Activated CD8-positive, alpha-beta T cell treated with anti-CD3 and anti-CD28 coated beads for 36 hours (primary cell): ENCODE measurements at regions of chr17 and their contacts with region 1.

Region 1: DNA sequence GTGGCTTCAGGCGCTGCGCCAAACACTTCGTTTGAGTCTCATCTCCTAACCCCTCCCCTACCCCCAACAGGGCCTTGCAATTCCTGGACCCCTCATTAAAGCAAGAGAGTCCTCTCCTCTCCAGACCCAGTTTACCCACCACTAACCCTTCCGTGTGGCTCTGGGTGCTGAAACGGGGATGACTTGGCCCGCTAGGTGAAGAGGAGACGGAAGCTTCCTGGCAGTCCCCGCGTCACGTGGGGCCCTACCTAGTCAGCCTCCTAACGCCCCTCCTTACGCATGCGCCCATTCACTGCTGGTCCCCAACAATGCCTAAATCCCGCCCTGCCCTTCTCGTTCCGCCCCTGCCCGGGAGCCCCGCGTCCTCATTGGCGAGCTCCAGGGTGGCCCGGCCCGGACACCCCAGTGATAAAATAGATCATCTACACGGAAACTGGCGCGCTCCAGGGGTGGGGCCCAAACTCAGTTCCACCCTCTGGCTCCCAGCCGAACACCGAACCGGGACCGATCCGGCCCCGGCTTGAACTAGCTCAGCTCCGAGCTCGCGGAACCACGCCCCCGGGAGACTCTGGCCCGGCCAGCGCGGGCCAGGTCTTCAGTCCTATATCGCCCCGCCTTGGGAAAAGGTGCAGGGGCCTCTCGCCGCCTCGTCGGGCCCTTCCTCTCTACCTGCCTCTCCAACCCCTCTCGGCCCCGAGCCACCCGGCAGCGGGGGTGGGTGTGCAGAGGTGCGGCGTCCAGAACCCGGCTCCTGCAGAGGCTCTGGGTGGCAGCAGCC is at the start of gene SLC16A13:
- DNase-seq: peak; percentile 99
- ATAC-seq: peak; percentile 95
- H3K4me3 Mint-ChIP-seq: peak within 1 kb of the TSS; percentile 93
- H3K27ac Mint-ChIP-seq: peak within 1 kb of the TSS; percentile 96
- H3K4me1 Mint-ChIP-seq: peaks cover 47% of the 10 kb centered on the region
- H3K27me3 Mint-ChIP-seq: no peaks in the 10 kb centered on the region
- CTCF ChIP-seq: no peak
- total RNA-seq, gene SLC16A13: 4.8 to 5.9 TPM

Region 2: DNA sequence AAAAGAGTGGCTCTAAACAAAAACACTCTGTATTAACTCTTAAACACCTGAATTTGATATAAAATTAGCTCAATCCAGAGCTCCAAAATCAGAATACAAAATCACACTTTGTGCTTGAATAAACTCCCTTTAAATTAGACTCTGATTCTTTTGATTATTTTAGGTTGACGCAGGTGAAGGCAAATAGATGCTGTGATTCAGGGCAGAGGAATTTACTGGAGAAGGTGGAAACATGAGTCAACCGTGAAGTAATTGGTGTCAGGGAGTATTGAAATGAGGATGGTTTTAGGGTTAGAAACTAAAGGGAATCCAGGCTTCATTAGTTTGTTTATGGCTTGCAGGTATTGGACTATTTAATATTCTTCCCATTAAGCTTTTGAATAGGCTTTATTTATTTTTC is 167.2 kb before region 1 on chr17:
- CTCF ChIA-PET with region 1: no interaction called
- POLR2A ChIA-PET with region 1: no interaction called
- intact Hi-C with region 1: no loop called
- DNase-seq: no peak
- ATAC-seq: no peak
- H3K4me3 Mint-ChIP-seq: no peak overlapping the region
- H3K27ac Mint-ChIP-seq: no peak overlapping the region
- H3K4me1 Mint-ChIP-seq: no peaks in the 10 kb centered on the region
- H3K27me3 Mint-ChIP-seq: peaks cover 13% of the 10 kb centered on the region
- CTCF ChIP-seq: no peak

Region 3: GRCh38 chr17:7014261-7014994 is 21.4 kb before region 1 on chr17:
- CTCF ChIA-PET with region 1: interaction called, 6 read pairs
- POLR2A ChIA-PET with region 1: interaction called, 11 read pairs
- intact Hi-C with region 1: no loop called
- DNase-seq: peak; percentile 98
- ATAC-seq: peak; percentile 86
- H3K4me3 Mint-ChIP-seq: peak overlapping the region; percentile 83
- H3K27ac Mint-ChIP-seq: peak overlapping the region; percentile 98
- H3K4me1 Mint-ChIP-seq: peaks cover 52% of the 10 kb centered on the region
- H3K27me3 Mint-ChIP-seq: no peaks in the 10 kb centered on the region
- CTCF ChIP-seq: peak; percentile 77

Region 4: DNA sequence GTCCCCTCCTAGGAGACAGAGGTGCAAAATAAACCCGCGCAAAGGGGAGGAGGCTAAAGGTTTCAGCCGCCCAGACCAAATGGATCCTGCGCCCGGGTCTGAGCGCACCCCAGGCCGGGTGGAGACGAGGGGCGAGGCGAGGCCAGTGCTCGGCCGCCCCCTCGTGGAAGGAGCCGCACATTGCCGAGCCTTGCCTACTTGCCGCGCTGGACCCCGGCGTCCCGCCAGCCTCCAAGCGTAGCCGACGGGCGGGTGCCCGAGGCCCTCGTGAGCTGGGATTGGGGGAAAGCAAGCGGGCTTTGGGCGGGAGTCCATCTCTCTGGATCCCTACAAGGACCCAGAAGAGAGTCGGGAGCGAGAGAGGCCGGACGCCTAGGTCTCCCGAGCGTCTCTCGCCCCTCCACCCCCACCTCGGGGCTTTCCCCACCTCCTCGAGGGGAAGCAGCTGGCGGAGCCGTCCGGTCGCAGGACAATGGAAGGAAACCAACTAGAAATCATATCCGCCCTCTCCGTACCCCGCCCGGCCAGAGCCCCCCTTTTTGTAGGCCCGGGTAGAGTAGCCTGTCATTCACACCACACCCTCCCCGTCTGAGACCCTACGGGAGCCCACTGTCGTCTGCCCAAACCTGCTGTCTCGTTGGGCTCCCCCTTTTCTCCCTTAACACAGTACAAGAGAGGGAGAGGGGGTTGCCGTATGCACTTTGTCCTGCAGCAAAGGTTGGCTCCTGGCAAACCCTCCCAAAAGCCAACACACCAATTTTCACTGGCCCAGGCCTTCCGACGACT is 13.6 kb before region 1 on chr17:
- CTCF ChIA-PET with region 1: interaction called, 26 read pairs
- POLR2A ChIA-PET with region 1: interaction called, 18 read pairs
- intact Hi-C with region 1: no loop called
- DNase-seq: peak; percentile 88
- ATAC-seq: peak; percentile 78
- H3K4me3 Mint-ChIP-seq: peak overlapping the region; percentile 72
- H3K27ac Mint-ChIP-seq: peak overlapping the region; percentile 63
- H3K4me1 Mint-ChIP-seq: peaks cover 45% of the 10 kb centered on the region
- H3K27me3 Mint-ChIP-seq: no peaks in the 10 kb centered on the region
- CTCF ChIP-seq: peak; percentile 95